MCF 10A (cell line): ENCODE measurements at regions of chr16 and their contacts with region 1.

Region 1: DNA sequence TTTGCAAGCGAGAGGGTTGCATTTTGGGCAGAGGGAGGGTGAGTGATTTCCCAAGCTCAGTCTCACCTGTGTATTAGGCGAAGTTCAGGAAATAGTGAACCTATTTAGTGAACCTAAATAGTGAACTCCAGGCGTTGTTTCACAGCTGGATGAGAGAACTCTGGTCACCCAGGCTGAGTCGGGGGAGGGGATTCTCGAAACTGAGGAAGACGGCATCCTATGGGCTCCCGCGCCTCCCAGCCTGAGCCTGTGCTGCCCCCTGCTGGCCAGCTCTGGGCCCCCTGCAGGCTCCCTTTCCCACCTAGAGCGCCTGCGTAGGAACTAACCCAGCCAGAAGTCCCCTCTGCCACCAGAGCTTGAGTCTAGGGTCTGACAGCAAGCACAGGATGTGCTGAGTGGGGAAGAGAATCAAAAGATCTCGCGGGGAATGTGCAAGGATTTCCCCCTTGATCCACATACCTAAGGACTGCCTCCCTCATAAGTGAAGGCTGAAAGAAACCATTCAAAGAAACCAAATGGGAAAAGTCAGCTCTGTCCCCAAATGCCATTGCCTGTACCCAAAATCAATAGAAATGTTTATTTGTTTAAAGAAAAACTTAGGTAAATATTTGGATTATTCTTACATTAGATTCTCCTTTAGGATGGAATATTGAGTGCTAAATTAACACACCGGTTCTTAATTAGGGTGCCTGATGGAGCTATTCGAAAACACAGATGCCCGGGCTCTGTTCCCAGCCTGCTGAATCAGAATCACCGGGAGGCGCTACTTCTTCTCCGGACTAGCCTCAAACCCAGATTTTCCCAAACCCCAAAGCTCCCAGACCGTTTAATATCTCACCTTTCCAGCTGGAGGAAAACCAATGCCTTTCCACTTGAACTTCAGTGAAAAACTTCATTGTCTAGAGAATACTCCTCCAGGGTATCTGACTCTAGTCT is 14.8 kb upstream of the MARVELD3 start:
- DNase-seq: peak; percentile 65
- H3K4me3 Mint-ChIP-seq: no peak overlapping the region
- H3K27ac Mint-ChIP-seq: no peak overlapping the region
- H3K4me1 Mint-ChIP-seq: no peaks in the 10 kb centered on the region
- H3K27me3 Mint-ChIP-seq: no peaks in the 10 kb centered on the region
- CTCF ChIP-seq: peak; percentile 90

Region 2: GRCh38 chr16:70715055-70715858 is 895.9 kb before region 1 on chr16:
- CTCF ChIA-PET with region 1: no interaction called
- POLR2A ChIA-PET with region 1: no interaction called
- intact Hi-C with region 1: no loop called
- DNase-seq: peak; percentile 99
- H3K4me3 Mint-ChIP-seq: peak overlapping the region; percentile 60
- H3K27ac Mint-ChIP-seq: peak overlapping the region; percentile 96
- H3K4me1 Mint-ChIP-seq: peaks cover 34% of the 10 kb centered on the region
- H3K27me3 Mint-ChIP-seq: no peaks in the 10 kb centered on the region
- CTCF ChIP-seq: no peak

Region 3: GRCh38 chr16:71467810-71468209 is 143.4 kb before region 1 on chr16:
- CTCF ChIA-PET with region 1: no interaction called
- POLR2A ChIA-PET with region 1: no interaction called
- intact Hi-C with region 1: no loop called
- DNase-seq: peak; percentile 56
- H3K4me3 Mint-ChIP-seq: no peak overlapping the region
- H3K27ac Mint-ChIP-seq: no peak overlapping the region
- H3K4me1 Mint-ChIP-seq: no peaks in the 10 kb centered on the region
- H3K27me3 Mint-ChIP-seq: no peaks in the 10 kb centered on the region
- CTCF ChIP-seq: no peak

Region 4: DNA sequence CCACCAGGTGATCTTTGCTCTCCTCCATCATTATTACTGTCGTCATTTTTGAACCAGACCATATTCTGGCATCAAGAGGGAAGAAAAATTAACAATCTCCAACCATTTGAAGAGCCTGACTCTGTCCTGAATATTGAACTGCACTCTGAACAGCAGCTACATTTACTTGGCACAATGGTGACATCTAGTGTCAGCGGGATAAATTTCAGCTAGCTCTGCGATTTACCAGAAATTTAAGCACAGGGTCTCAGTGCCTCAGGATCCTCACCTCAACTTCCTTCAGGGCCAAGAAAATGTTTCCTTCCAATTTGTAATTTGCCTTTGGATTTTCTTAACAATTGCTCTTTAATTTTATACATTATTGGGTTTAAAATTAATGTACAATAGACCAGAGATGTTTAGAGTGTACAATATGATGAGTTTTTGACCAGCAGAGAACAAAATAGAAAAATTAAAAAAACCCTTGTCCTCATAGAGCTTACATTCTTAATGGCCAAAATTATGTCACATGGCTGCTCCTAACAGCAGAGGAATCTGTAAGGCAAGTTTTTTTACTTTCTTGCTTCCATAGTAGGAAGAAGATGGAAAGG is 111.3 kb before region 1 on chr16:
- CTCF ChIA-PET with region 1: interaction called, 46 read pairs
- POLR2A ChIA-PET with region 1: no interaction called
- intact Hi-C with region 1: loop called (anchors 10 kb)
- DNase-seq: peak; percentile 56
- H3K4me3 Mint-ChIP-seq: no peak overlapping the region
- H3K27ac Mint-ChIP-seq: no peak overlapping the region
- H3K4me1 Mint-ChIP-seq: peaks cover 2% of the 10 kb centered on the region
- H3K27me3 Mint-ChIP-seq: peaks cover 9% of the 10 kb centered on the region
- CTCF ChIP-seq: peak; percentile 73

Region 5: DNA sequence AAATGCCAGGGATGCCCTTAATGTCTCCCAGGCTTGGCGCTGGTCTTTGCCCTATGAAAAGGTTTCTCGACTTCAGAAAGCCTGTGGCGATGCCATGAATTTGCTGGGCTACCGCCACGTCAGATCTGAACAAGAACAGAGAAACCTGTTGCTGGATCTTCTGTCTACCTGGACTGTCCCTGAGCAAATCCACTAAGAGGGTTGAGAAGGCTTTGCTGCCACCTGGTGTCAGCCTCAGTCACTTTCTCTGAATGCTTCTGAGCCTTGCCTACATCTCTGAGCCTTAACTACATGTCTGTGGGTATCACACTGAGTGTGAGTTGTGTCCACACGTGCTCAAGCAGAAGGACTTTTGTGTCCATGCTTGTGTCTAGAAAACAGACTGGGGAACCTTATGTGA is 73.6 kb before region 1 on chr16:
- CTCF ChIA-PET with region 1: interaction called, 32 read pairs
- POLR2A ChIA-PET with region 1: no interaction called
- intact Hi-C with region 1: no loop called
- DNase-seq: peak; percentile 69
- H3K4me3 Mint-ChIP-seq: no peak overlapping the region
- H3K27ac Mint-ChIP-seq: no peak overlapping the region
- H3K4me1 Mint-ChIP-seq: no peaks in the 10 kb centered on the region
- H3K27me3 Mint-ChIP-seq: peaks cover 11% of the 10 kb centered on the region
- CTCF ChIP-seq: peak; percentile 76

Region 6: GRCh38 chr16:71564155-71564967 is 46.8 kb before region 1 on chr16:
- CTCF ChIA-PET with region 1: interaction called, 30 read pairs
- POLR2A ChIA-PET with region 1: no interaction called
- intact Hi-C with region 1: loop called (anchors 2 kb)
- DNase-seq: no peak
- H3K4me3 Mint-ChIP-seq: peak overlapping the region; percentile 78
- H3K27ac Mint-ChIP-seq: peak overlapping the region; percentile 62
- H3K4me1 Mint-ChIP-seq: peaks cover 6% of the 10 kb centered on the region
- H3K27me3 Mint-ChIP-seq: peaks cover 3% of the 10 kb centered on the region
- CTCF ChIP-seq: no peak

Region 7: GRCh38 chr16:71600822-71601221 is 10.4 kb before region 1 on chr16:
- CTCF ChIA-PET with region 1: interaction called, 25 read pairs
- POLR2A ChIA-PET with region 1: no interaction called
- intact Hi-C with region 1: no loop called
- DNase-seq: no peak
- H3K4me3 Mint-ChIP-seq: no peak overlapping the region
- H3K27ac Mint-ChIP-seq: no peak overlapping the region
- H3K4me1 Mint-ChIP-seq: no peaks in the 10 kb centered on the region
- H3K27me3 Mint-ChIP-seq: peaks cover 24% of the 10 kb centered on the region
- CTCF ChIP-seq: no peak